CD8-positive, alpha-beta T cell (primary cell): ENCODE measurements at regions of chr12 and their contacts with region 1.

Region 1: GRCh38 chr12:10212201-10213131 is at the start of gene GABARAPL1:
- DNase-seq: peak; percentile 76 to 94 (median 88)
- ATAC-seq: peak; percentile 69
- H3K4me3 ChIP-seq: peak within 1 kb of the TSS; percentile 75 to 93
- H3K4me3 Mint-ChIP-seq: peak within 1 kb of the TSS; percentile 91
- H3K27ac ChIP-seq: peak within 1 kb of the TSS; percentile 93 to 98
- H3K27ac Mint-ChIP-seq: peak within 1 kb of the TSS; percentile 97
- H3K4me1 ChIP-seq: peaks cover 19% of the 10 kb centered on the region
- H3K4me1 Mint-ChIP-seq: peaks cover 28% of the 10 kb centered on the region
- H3K27me3 ChIP-seq: no peaks in the 10 kb centered on the region
- H3K27me3 Mint-ChIP-seq: no peaks in the 10 kb centered on the region
- CTCF ChIP-seq: no peak
- total RNA-seq, gene GABARAPL1: 377 to 380 TPM

Region 2: DNA sequence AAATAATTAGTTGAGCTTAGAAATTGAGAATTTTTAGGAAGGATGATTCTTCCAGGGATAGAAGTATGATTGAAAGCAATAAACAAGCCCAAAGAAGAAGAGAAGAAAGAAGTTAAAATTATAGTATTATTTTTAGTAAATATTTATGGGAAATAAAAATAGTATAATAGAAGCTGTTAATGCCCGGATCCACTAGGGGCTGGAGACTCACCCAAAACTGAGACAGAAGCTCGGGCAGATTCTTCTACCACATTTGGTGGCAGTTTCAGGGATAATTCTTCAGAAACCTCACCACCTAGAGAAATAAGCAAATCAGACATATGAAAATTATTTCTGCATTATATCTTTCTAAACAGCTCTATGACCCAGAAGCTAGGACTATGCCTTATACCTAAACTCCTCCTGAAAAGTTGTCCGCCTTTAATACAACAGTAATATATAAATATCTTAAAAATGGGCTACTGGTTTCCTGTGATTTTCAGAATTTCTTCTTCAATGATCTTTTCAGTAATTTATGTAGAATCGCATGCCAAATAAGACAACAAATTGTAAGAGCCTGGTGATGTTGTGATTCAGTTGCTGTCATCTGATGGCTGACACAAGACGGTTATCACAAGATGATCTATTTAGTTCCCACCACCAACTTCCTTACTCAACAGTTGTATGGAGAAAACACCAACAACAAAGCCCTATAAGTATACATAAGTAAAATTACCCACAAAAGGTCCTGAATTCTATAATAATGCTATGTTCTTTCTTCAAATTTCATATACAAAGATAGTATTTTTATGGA is 1132.4 kb before region 1 on chr12:
- CTCF ChIA-PET with region 1: no interaction called
- POLR2A ChIA-PET with region 1: no interaction called
- intact Hi-C with region 1: no loop called
- DNase-seq: no peak
- ATAC-seq: no peak
- H3K4me3 ChIP-seq: no peak overlapping the region
- H3K4me3 Mint-ChIP-seq: no peak overlapping the region
- H3K27ac ChIP-seq: no peak overlapping the region
- H3K27ac Mint-ChIP-seq: no peak overlapping the region
- H3K4me1 ChIP-seq: no peaks in the 10 kb centered on the region
- H3K4me1 Mint-ChIP-seq: peaks cover 6% of the 10 kb centered on the region
- H3K27me3 ChIP-seq: no peaks in the 10 kb centered on the region
- H3K27me3 Mint-ChIP-seq: no peaks in the 10 kb centered on the region
- CTCF ChIP-seq: no peak

Region 3: DNA sequence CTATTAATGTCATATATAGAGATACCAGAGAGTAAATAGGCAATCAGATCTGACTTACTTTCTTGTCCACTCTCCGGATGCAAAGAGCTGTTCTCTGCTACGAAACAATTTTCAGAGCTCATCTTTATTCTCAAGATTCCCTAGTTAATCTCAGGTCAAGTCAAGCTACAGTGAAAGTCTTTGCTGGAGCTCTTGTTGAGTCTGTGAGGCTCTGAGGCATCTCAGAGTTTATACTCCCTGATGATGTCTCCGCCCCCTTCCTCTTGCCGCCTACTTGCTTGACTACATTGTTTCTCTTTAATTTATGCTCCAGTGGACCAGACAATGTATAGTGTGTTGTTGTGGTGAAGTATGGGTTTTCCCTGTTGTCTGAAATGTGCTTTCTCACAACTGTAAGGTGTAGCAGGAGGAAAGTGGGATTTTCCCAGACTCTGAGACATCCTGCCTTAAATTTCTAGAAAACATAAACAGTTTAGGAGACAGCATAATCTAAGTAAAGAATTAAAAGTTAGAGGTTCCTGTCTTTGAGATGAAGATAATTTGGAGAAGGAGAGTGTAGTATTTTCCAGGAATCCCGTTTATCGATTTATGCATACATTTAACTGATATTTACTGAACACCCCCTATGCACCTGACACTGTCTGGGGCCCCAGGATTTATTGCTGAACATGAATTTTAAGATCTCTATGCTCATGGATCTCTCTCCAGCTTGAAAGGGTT is 451.6 kb before region 1 on chr12 and contains the start of gene CD69:
- CTCF ChIA-PET with region 1: no interaction called
- POLR2A ChIA-PET with region 1: no interaction called
- intact Hi-C with region 1: loop called in 1 of 2 experiments (anchors 2 kb)
- DNase-seq: peak; percentile 60 to 96 (median 77)
- ATAC-seq: peak; percentile 53
- H3K4me3 ChIP-seq: peak within 1 kb of the TSS; percentile 79
- H3K4me3 Mint-ChIP-seq: peak within 1 kb of the TSS; percentile 100
- H3K27ac ChIP-seq: peak within 1 kb of the TSS; percentile 97 to 98
- H3K27ac Mint-ChIP-seq: peak within 1 kb of the TSS; percentile 96
- H3K4me1 ChIP-seq: peaks cover 51% of the 10 kb centered on the region
- H3K4me1 Mint-ChIP-seq: peaks cover 64% of the 10 kb centered on the region
- H3K27me3 ChIP-seq: no peaks in the 10 kb centered on the region
- H3K27me3 Mint-ChIP-seq: no peaks in the 10 kb centered on the region
- CTCF ChIP-seq: no peak
- total RNA-seq, gene CD69: 502 to 504 TPM

Region 4: GRCh38 chr12:10016881-10017280 is 195.6 kb before region 1 on chr12:
- CTCF ChIA-PET with region 1: no interaction called
- POLR2A ChIA-PET with region 1: no interaction called
- intact Hi-C with region 1: no loop called
- DNase-seq: no peak
- ATAC-seq: no peak
- H3K4me3 ChIP-seq: no peak overlapping the region
- H3K4me3 Mint-ChIP-seq: no peak overlapping the region
- H3K27ac ChIP-seq: no peak overlapping the region
- H3K27ac Mint-ChIP-seq: no peak overlapping the region
- H3K4me1 ChIP-seq: no peaks in the 10 kb centered on the region
- H3K4me1 Mint-ChIP-seq: no peaks in the 10 kb centered on the region
- H3K27me3 ChIP-seq: no peaks in the 10 kb centered on the region
- H3K27me3 Mint-ChIP-seq: peaks cover 9% of the 10 kb centered on the region
- CTCF ChIP-seq: no peak

Region 5: DNA sequence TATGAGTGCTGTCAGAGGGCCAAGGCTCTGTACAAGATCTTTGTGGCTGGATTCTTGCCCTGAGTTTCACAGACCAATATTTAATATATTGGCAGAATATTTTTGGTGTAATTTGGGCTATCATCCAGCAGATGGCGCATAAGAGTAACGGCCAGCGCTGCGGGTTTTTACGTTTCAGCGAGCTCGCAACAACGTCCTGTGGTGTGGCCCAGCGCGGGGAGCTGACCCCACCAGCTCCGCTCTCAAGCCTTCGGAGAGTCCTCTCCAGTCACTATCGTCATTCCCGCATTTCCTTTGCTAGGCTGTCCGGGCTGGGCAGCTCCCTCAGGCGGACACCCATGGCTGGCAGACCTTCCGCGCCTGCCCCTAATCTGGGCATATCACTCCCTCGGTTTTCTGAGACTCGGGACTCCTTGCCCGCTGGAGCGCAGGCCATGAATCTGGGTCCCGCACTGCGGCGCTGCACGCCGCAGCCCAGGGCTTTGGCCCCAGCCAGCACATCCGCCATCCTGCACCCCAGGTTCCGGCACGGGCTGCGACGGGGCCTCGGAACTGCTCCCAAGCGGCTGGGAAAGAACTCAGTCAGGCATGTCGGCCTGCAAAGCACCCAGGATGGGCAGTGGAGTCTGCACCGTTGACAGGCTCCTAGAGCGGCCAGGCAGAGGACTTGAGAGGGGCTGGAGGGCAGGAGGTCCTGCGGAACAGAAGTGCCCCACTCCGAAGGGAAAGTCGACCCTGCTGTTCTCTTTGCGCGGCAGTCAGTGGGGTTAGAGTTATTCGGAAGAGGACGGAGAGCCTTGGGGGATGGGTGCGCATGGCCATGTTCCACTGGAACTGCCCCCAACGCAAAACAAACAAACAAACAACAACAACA is 59.0 kb before region 1 on chr12:
- CTCF ChIA-PET with region 1: interaction called, 6 read pairs
- POLR2A ChIA-PET with region 1: no interaction called
- intact Hi-C with region 1: loop called in 1 of 2 experiments (anchors 2 kb)
- DNase-seq: peak; percentile 21 to 78 (median 53)
- ATAC-seq: peak; percentile 88
- H3K4me3 ChIP-seq: peak overlapping the region; percentile 75 to 80
- H3K4me3 Mint-ChIP-seq: peak overlapping the region; percentile 94
- H3K27ac ChIP-seq: peak overlapping the region in 1 of 2 experiments; percentile 5
- H3K27ac Mint-ChIP-seq: peak overlapping the region; percentile 79
- H3K4me1 ChIP-seq: peaks cover 3% of the 10 kb centered on the region
- H3K4me1 Mint-ChIP-seq: peaks cover 13% of the 10 kb centered on the region
- H3K27me3 ChIP-seq: no peaks in the 10 kb centered on the region
- H3K27me3 Mint-ChIP-seq: no peaks in the 10 kb centered on the region
- CTCF ChIP-seq: peak; percentile 92

Region 6: GRCh38 chr12:10249690-10250455 is 37.4 kb after region 1 on chr12:
- CTCF ChIA-PET with region 1: no interaction called
- POLR2A ChIA-PET with region 1: no interaction called
- intact Hi-C with region 1: no loop called
- DNase-seq: peak in 5 of 9 experiments; percentile 14 to 79 (median 38)
- ATAC-seq: peak; percentile 51
- H3K4me3 ChIP-seq: peak overlapping the region in 1 of 2 experiments; percentile 12
- H3K4me3 Mint-ChIP-seq: peak overlapping the region; percentile 1
- H3K27ac ChIP-seq: peak overlapping the region in 1 of 2 experiments; percentile 68
- H3K27ac Mint-ChIP-seq: peak overlapping the region; percentile 25
- H3K4me1 ChIP-seq: peaks cover 10% of the 10 kb centered on the region
- H3K4me1 Mint-ChIP-seq: peaks cover 26% of the 10 kb centered on the region
- H3K27me3 ChIP-seq: no peaks in the 10 kb centered on the region
- H3K27me3 Mint-ChIP-seq: no peaks in the 10 kb centered on the region
- CTCF ChIP-seq: no peak

Region 7: DNA sequence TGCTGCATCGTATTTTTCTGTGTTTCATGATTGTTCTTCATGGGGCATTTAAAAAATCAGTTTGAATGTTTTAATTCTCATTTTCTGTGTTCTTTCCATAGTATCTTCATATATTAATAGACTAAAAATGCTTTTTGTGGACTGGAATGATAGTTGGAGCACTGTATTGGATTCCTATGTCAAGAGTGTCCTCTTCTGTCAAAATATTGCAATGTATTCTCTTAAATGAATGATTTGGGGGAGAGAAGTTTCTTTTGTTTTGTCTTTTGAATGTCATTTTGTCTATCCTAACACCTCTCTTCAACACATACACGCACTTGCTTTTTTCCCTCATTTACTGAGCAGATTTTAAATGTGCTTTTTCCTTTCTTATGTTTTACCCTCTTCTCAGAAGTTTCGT is 288.6 kb after region 1 on chr12:
- CTCF ChIA-PET with region 1: no interaction called
- POLR2A ChIA-PET with region 1: no interaction called
- intact Hi-C with region 1: loop called in 1 of 2 experiments (anchors 5 kb)
- DNase-seq: peak in 2 of 9 experiments; percentile 36 to 59
- ATAC-seq: no peak
- H3K4me3 ChIP-seq: no peak overlapping the region
- H3K4me3 Mint-ChIP-seq: peak overlapping the region; percentile 57
- H3K27ac ChIP-seq: no peak overlapping the region
- H3K27ac Mint-ChIP-seq: peak overlapping the region; percentile 82
- H3K4me1 ChIP-seq: peaks cover 56% of the 10 kb centered on the region
- H3K4me1 Mint-ChIP-seq: peaks cover 51% of the 10 kb centered on the region
- H3K27me3 ChIP-seq: no peaks in the 10 kb centered on the region
- H3K27me3 Mint-ChIP-seq: no peaks in the 10 kb centered on the region
- CTCF ChIP-seq: no peak

Region 8: DNA sequence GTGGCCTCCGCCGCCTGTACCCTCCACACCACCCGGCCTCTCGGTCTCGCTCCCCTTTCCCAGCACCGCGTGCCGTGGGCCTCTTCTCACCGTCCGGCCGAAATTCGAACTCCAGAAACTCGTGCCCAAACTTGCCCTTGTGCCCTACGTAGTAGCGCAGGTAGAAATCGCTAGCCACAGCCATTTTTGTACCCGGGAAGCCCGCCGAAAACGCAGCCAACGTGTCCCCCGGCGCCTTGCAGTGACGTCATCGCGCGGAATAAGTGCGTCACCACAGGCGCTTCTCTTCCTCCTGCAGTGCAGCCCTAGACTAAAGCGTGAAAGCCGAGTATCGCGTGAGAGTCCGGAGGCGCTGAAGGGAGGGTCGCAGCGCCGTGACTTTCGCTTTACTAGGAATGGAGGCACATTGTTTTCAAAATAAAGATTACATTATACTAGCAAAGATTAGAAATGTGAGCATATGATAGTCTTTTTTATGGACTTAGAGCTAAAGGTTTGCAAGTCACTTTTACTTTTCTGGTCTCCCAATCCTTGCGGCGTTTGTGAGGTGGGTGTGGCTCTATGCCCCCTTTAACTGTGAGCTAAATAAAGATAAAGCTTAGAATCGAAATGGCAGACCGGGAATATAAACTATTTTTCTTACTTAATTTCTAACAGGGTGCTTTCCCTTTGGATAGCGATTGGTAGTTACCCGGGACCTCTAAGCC is 401.0 kb after region 1 on chr12 and contains the start of gene MAGOHB:
- CTCF ChIA-PET with region 1: no interaction called
- POLR2A ChIA-PET with region 1: interaction called, 3 read pairs
- intact Hi-C with region 1: loop called in 1 of 2 experiments (anchors 1 kb)
- DNase-seq: peak; percentile 97 to 100 (median 99)
- ATAC-seq: peak; percentile 90
- H3K4me3 ChIP-seq: peak within 1 kb of the TSS; percentile 74 to 97
- H3K4me3 Mint-ChIP-seq: peak within 1 kb of the TSS; percentile 100
- H3K27ac ChIP-seq: peak within 1 kb of the TSS; percentile 91 to 99
- H3K27ac Mint-ChIP-seq: peak within 1 kb of the TSS; percentile 100
- H3K4me1 ChIP-seq: peaks cover 19% of the 10 kb centered on the region
- H3K4me1 Mint-ChIP-seq: peaks cover 33% of the 10 kb centered on the region
- H3K27me3 ChIP-seq: no peaks in the 10 kb centered on the region
- H3K27me3 Mint-ChIP-seq: no peaks in the 10 kb centered on the region
- CTCF ChIP-seq: no peak
- total RNA-seq, gene MAGOHB: 7.9 to 8.5 TPM

Region 9: GRCh38 chr12:11981121-11981733 is 1768.8 kb after region 1 on chr12:
- CTCF ChIA-PET with region 1: no interaction called
- POLR2A ChIA-PET with region 1: no interaction called
- intact Hi-C with region 1: loop called in 1 of 2 experiments (anchors 5 kb)
- DNase-seq: peak in 8 of 9 experiments; percentile 9 to 92 (median 36)
- ATAC-seq: peak; percentile 86
- H3K4me3 ChIP-seq: peak overlapping the region in 1 of 2 experiments; percentile 13
- H3K4me3 Mint-ChIP-seq: peak overlapping the region; percentile 0
- H3K27ac ChIP-seq: peak overlapping the region in 1 of 2 experiments; percentile 69
- H3K27ac Mint-ChIP-seq: peak overlapping the region; percentile 86
- H3K4me1 ChIP-seq: peaks cover 24% of the 10 kb centered on the region
- H3K4me1 Mint-ChIP-seq: peaks cover 30% of the 10 kb centered on the region
- H3K27me3 ChIP-seq: no peaks in the 10 kb centered on the region
- H3K27me3 Mint-ChIP-seq: no peaks in the 10 kb centered on the region
- CTCF ChIP-seq: no peak